Dorsolateral prefrontal cortex (tissue), 120 donors: ENCODE measurements at regions of chr11 and their contacts with region 1.

Region 1: GRCh38 chr11:45964911-45965389 is 42.5 kb downstream of the LARGE2 start:
- DNase-seq: peak in 8 of 10 donors; percentile 50 to 80 (median 66)
- H3K4me3 ChIP-seq: peak overlapping the region in 3 of 59 donors; percentile 6 to 22 (median 10)
- H3K27ac ChIP-seq: peak overlapping the region in 47 of 59 donors; percentile 1 to 76 (median 58)
- H3K27me3 ChIP-seq: no peaks in the 10 kb centered on the region
- CTCF ChIP-seq: peak; percentile 66 to 97 (median 93)

Region 2: DNA sequence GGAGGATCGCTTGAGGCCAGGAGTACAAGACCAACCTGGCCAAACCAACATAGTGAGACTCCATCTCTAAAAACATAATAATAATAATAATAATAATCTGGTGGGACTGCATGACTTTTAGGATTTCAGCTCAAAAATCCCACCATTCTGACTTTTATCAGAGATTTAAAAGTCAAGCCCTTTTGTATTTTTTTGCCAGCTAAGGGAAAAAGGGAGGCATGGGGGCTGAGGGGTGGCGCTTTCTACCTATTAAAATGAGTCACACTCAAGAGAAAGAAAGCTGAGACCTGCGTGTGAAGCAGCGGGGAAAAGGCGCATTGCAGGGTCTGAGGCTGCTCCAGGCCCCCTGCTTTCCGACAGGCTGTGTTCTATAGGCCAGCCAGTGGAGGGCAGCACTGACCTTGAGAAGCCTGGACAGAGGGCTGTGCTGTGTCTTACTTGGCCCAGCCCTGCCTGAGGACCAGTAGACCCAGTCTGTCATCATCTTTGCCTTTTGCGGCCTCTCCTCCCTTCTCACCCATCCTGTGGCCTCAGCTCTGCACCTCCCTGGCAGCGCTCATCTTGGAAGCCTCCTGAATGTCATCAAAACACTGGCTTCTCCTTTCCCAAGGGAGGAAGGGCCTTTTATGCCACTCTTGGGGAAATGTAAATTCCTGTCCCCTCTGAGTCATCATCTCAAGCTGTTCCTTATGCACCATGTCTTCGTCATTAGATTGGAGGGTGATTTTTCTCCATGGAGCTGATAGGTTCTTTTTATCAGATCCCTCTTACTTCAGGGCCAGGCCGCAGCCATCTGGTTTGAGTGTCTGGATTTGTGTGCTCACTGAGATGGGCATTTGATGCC is 92.2 kb before region 1 on chr11:
- intact Hi-C with region 1: loop called in 1 of 2 experiments (anchors 5 kb)
- DNase-seq: peak; percentile 53 to 82 (median 74)
- H3K4me3 ChIP-seq: no peak overlapping the region
- H3K27ac ChIP-seq: peak overlapping the region in 55 of 59 donors; percentile 15 to 85 (median 66)
- H3K27me3 ChIP-seq: no peaks in the 10 kb centered on the region
- CTCF ChIP-seq: peak; percentile 23 to 92 (median 82)

Region 3: DNA sequence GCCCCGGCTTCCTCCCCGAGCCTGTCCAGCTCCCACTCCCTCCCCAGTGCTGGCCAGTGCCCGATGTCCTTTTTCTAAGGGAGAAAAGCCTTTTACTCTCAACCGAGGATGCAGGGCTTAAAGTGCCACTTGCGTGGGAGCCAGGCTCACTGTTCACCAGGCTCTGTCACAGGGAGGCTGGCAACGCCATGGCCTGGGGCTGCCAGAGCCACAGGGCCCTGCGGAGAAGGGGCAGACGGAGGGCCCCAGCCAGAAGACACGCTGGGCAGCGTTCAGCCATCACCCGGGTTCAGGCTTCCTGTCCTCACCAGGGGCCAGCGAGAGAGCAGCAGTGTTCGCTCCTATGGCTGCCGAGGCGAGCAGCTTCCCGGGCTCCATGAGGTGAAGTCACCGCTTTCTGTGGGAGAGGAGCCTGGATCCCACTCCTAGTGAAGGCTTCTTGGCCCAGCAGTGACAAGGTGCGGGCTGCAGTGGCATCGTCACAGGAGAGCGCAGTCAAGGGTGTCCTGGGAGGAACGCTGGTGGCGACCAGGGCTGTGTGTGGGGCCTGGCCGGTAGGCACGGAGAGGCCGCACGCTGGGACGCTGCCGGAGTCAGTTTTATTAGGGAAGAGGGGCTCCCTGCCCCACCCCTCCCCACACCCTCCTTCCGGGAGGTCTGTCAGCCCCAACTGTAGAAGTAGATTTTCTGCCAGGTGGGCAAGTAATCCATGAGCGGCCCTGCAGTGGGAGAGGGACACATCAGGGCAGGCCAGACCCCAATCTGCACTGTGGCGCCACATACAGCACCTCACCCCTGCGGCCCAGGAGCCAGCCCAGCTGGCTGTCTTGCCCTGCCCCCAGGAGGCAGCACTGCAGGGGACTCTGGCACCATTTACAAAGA is 55.1 kb before region 1 on chr11:
- intact Hi-C with region 1: loop called in 1 of 2 experiments (anchors 5 kb)
- DNase-seq: peak in 1 of 10 donors; percentile 50
- H3K4me3 ChIP-seq: no peak overlapping the region
- H3K27ac ChIP-seq: peak overlapping the region in 37 of 59 donors; percentile 5 to 99 (median 69)
- H3K27me3 ChIP-seq: no peaks in the 10 kb centered on the region
- CTCF ChIP-seq: no peak

Region 4: GRCh38 chr11:46346886-46347636 is 382.1 kb after region 1 on chr11 and contains the start of gene DGKZ:
- intact Hi-C with region 1: no loop called
- DNase-seq: peak; percentile 78 to 95 (median 88)
- H3K4me3 ChIP-seq: peak within 1 kb of the TSS; percentile 42 to 90 (median 79)
- H3K27ac ChIP-seq: peak within 1 kb of the TSS in 56 of 59 donors; percentile 15 to 91 (median 82)
- H3K27me3 ChIP-seq: no peaks in the 10 kb centered on the region
- CTCF ChIP-seq: peak; percentile 31 to 92 (median 71)
- total RNA-seq, gene DGKZ: 142 to 475 (median 319) TPM